Right ventricle myocardium superior (tissue), 1 donor: ENCODE measurements at regions of chrX and their contacts with region 1.

Region 1: DNA sequence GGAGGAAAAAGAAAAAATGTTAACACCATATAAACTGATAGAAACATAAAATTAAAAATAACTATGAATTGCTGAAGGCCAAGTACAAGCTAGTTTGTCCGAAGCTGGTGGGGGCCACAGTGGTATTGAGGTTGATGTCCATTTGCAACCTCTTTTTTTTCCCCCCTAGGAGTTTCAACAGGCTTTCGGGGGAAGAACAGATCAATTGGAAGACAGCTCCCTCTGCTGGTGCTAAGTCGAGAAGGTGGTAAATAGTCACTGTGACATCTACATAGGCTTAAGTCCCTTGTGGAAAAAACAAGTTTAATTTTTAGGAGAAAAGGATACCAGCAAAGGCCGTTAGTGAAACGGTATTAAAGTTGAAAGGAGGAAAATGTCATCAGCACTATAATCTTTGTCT is 115.7 kb upstream of the ZXDA start:
- DNase-seq: no peak
- ATAC-seq: no peak

Region 2: GRCh38 chrX:57156397-57157049 is 869.5 kb before region 1 on chrX:
- intact Hi-C with region 1: no loop called
- DNase-seq: peak; percentile 39
- ATAC-seq: peak; percentile 60

Region 3: DNA sequence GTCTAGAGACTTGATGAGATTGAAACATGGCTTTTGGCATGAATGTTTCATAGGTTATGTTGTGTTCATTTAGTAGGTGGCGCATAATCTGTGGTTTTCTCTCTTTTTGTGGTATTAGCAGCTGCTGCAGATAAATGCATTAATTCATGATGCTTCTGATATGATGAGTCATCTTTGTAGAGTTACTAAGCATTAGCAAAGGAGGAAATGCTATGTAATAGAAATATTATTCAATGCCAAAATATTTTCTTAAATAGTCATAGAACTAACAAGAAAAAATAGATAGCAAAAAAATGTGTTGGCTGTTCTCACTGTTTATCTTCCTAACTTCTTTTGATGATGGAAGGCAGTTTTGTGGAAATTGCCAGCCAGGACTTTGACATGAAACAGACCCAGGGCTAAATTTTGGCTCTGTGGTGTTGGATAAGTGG is 430.6 kb before region 1 on chrX:
- intact Hi-C with region 1: no loop called
- DNase-seq: no peak
- ATAC-seq: no peak

Region 4: DNA sequence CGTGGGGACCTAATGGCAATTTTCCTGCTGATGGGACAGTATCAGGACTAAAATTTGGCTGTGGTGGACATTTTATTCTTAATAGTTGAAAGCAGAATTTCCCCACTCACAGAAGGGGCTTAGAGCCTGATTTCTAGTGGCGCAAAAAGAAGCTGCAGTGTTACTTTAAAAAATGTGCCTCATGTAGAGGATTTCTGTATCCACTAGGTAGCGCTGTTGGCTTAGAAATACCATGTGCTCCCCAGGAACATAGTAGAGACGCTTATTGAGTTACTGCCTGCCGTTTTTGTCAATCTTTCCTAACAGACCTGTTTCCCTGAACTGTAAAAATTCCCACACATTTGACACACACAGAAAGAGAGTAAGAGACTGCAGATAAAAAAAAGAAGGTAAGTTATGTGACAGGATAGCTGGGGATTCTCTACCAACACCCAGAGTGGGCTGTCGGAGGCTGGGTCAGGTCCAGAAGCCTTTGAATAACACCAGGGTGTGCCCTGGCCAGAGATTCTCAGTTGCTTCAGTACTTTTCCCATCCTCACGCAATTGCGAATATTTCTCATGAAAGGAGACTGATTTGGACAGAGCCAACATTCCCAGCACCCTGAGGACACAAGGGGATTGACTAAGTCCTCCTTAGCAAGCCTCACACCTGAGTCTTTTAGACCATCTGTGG is 204.1 kb before region 1 on chrX:
- intact Hi-C with region 1: loop called (anchors 5 kb)
- DNase-seq: no peak
- ATAC-seq: peak; percentile 90

Region 5: DNA sequence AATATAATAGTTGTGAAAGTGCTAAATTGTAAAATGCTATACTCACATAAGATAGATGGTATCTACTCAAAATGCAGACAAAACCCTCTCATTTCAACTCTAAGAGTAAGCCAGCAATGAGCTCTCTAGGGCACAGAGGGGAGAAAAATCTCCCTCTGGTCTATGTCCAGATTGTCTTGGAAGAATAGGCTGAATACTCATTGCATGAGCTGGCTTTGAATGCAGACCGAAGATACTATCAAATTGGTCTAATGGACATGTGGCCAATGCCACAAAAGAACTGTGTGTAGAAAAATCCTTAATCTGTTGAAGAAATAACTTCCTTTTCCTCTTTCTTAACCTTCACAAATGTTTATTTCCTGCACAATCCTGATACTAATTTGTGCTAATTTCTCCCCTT is 119.2 kb before region 1 on chrX:
- intact Hi-C with region 1: no loop called
- DNase-seq: no peak
- ATAC-seq: no peak

Region 6: DNA sequence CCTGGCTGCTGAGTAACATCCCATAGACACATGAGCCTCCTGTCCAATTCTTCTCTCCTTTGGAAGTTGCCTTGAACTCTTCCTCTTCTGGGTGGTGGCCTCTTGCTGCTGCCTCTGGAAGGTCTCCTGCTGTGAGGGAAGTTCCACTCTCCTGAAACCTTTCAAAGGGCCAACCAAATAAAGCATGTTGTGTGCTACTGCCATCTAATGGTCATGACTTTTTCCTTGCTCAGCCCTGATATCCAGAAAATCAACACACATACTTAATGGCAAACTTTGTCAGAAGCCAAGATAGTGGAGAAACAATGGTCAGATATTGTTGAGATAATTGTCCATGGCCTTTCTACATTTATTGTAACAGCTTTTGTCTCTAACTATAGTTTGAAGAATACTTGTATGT is 96.6 kb before region 1 on chrX:
- intact Hi-C with region 1: loop called (anchors 10 kb)
- DNase-seq: no peak
- ATAC-seq: peak; percentile 65